ENCODE measurements at regions of chr19 and their contacts with region 1.

Region 1: GRCh38 chr19:50657712-50658440 is 8.6 kb downstream of the C19orf81 start:
- DNase-seq: peak; percentile 94
- H3K4me3 Mint-ChIP-seq: peak overlapping the region; percentile 74
- H3K27ac Mint-ChIP-seq: peak overlapping the region; percentile 66
- H3K4me1 Mint-ChIP-seq: peaks cover 17% of the 10 kb centered on the region
- H3K27me3 Mint-ChIP-seq: peaks cover 65% of the 10 kb centered on the region

Region 2: GRCh38 chr19:50607874-50608785 is 49.7 kb before region 1 on chr19:
- CTCF ChIA-PET with region 1: no interaction called
- POLR2A ChIA-PET with region 1: no interaction called
- intact Hi-C with region 1: loop called (anchors 5 kb)
- DNase-seq: peak; percentile 89
- H3K4me3 Mint-ChIP-seq: no peak overlapping the region
- H3K27ac Mint-ChIP-seq: no peak overlapping the region
- H3K4me1 Mint-ChIP-seq: no peaks in the 10 kb centered on the region
- H3K27me3 Mint-ChIP-seq: peaks cover 28% of the 10 kb centered on the region

Region 3: DNA sequence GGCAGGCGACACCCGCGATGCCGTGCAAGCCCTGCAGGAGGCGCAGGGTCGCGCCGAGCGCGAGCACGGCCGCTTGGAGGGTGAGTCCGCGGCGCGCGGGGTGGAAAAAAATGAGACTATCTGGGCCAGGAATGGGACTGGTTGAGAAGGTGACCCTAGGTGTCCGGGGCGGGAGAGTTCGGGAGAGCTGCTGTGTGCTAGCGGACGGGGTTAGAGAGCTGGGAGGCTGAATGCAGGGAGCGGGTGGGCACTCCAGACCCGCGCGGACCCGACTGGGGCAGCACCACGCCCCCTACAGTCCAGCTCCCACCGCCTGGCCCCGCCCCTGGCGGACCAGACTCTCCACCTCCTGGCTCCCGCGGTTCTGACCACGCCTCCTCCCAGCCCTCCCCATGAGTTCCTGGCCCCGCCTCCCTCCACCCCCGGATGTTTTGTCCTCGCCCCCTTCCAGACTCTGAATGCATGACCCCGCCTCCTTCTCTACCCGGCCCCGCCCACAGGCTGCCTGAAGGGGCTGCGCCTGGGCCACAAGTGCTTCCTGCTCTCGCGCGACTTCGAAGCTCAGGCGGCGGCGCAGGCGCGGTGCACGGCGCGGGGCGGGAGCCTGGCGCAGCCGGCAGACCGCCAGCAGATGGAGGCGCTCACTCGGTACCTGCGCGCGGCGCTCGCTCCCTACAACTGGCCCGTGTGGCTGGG is 66.8 kb after region 1 on chr19:
- CTCF ChIA-PET with region 1: no interaction called
- POLR2A ChIA-PET with region 1: no interaction called
- intact Hi-C with region 1: no loop called
- DNase-seq: peak; percentile 97
- H3K4me3 Mint-ChIP-seq: peak overlapping the region; percentile 62
- H3K27ac Mint-ChIP-seq: no peak overlapping the region
- H3K4me1 Mint-ChIP-seq: peaks cover 22% of the 10 kb centered on the region
- H3K27me3 Mint-ChIP-seq: peaks cover 65% of the 10 kb centered on the region

Measured in activated CD4-positive, alpha-beta memory T cell treated with anti-CD3 and anti-CD28 coated beads for 36 hours (primary cell).